ENCODE measurements at regions of chr11 and their contacts with region 1.

Region 1: DNA sequence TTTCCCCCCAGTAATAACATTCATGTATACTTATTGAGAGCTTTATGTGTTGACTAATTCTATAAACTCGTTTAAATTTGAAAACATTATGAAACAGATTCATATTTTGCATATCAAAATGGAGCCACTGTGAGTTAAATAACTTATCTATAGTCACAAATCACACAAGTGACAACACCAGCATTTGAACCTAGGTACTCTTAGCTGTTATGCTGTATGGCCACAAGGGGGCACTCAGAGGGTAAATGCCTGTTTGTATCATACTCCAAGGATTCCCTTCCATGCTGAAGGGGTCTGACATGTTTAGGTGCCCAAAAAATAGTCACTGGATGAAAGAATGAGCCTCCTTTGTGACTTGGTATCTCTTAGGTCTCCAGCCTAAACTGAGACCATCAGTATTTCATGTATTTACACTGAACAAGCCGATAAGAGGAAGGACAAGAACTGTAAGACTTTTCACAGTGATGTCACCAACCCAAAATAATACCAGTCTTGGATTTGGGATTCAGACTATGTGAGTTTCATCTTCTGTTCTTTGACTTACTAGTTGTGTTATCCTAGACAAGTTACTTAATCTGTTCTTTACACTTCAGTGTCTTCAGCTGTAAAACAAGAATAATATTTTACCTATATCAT is 12.2 kb upstream of the OR52D1 start:
- DNase-seq: no peak
- ATAC-seq: peak; percentile 90
- H3K4me3 ChIP-seq: no peak overlapping the region
- H3K27ac ChIP-seq: no peak overlapping the region
- H3K4me1 ChIP-seq: no peaks in the 10 kb centered on the region
- H3K27me3 ChIP-seq: no peaks in the 10 kb centered on the region; a peak in 1 of 4 replicates
- CTCF ChIP-seq: peak; percentile 69 to 83 (median 75)
- EP300 ChIP-seq: no peak
- POLR2A ChIP-seq: no peak
- RAD21 ChIP-seq: peak; percentile 72

Region 2: GRCh38 chr11:5499671-5500070 is 23.4 kb after region 1 on chr11:
- CTCF ChIA-PET with region 1: interaction called, 12 read pairs
- POLR2A ChIA-PET with region 1: no interaction called
- RAD21 ChIA-PET with region 1: interaction called, 4 read pairs
- SMC1A ChIA-PET with region 1: interaction called, 7 read pairs
- in situ Hi-C with region 1: no loop called
- intact Hi-C with region 1: no loop called
- DNase-seq: no peak
- ATAC-seq: no peak
- H3K4me3 ChIP-seq: no peak overlapping the region
- H3K27ac ChIP-seq: no peak overlapping the region
- H3K4me1 ChIP-seq: no peaks in the 10 kb centered on the region
- H3K27me3 ChIP-seq: no peaks in the 10 kb centered on the region
- CTCF ChIP-seq: no peak
- EP300 ChIP-seq: no peak
- POLR2A ChIP-seq: no peak
- RAD21 ChIP-seq: no peak

Region 3: DNA sequence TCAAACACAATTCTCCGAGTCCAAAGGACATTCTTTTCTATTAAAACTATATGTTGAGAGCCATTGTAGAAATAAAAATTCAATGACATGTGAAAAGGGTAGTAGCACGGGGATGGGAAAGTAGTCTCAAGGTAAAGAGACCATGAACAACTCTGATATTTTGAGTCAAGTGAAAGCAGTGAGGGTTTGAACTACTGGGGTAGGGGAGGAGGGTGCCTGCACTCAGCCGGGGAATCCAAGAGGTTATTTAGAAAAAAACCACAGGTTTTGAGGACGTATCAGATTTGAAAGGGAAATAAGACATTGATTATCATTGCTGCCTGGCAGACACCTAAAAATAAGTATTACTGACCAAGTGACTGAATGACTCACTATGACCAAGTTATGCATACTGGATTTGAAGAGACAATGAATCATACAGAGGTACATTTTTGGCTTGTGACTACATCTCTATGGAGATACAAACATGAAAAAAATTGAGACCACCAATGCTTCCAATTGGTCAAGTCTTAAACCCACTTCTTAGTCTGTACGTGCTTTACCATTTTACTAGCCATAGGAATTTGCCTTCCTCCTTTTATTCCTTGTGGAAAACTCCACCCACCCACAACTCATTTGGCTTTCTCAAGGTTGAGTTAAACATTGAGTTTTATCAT is 74.3 kb after region 1 on chr11:
- CTCF ChIA-PET with region 1: interaction called, 20 read pairs
- POLR2A ChIA-PET with region 1: no interaction called
- RAD21 ChIA-PET with region 1: interaction called, 9 read pairs
- SMC1A ChIA-PET with region 1: interaction called, 10 read pairs
- in situ Hi-C with region 1: no loop called
- intact Hi-C with region 1: loop called (anchors 1 kb)
- DNase-seq: peak; percentile 8
- ATAC-seq: peak; percentile 78
- H3K4me3 ChIP-seq: no peak overlapping the region
- H3K27ac ChIP-seq: no peak overlapping the region
- H3K4me1 ChIP-seq: no peaks in the 10 kb centered on the region
- H3K27me3 ChIP-seq: no peaks in the 10 kb centered on the region
- CTCF ChIP-seq: no peak
- EP300 ChIP-seq: peak in 1 of 2 experiments; percentile 27; a peak in 1 of 4 replicates
- POLR2A ChIP-seq: no peak
- RAD21 ChIP-seq: no peak

Region 4: GRCh38 chr11:5556596-5557188 is 80.4 kb after region 1 on chr11:
- CTCF ChIA-PET with region 1: interaction called, 20 read pairs
- POLR2A ChIA-PET with region 1: no interaction called
- RAD21 ChIA-PET with region 1: interaction called, 9 read pairs
- SMC1A ChIA-PET with region 1: interaction called, 10 read pairs
- in situ Hi-C with region 1: no loop called
- intact Hi-C with region 1: loop called (anchors 1 kb)
- DNase-seq: no peak
- ATAC-seq: no peak
- H3K4me3 ChIP-seq: no peak overlapping the region
- H3K27ac ChIP-seq: no peak overlapping the region
- H3K4me1 ChIP-seq: no peaks in the 10 kb centered on the region
- H3K27me3 ChIP-seq: no peaks in the 10 kb centered on the region
- CTCF ChIP-seq: no peak
- EP300 ChIP-seq: no peak
- POLR2A ChIP-seq: no peak
- RAD21 ChIP-seq: no peak

Region 5: GRCh38 chr11:5703741-5704536 is 227.6 kb after region 1 on chr11:
- CTCF ChIA-PET with region 1: no interaction called
- POLR2A ChIA-PET with region 1: no interaction called
- RAD21 ChIA-PET with region 1: no interaction called
- SMC1A ChIA-PET with region 1: no interaction called
- in situ Hi-C with region 1: no loop called
- intact Hi-C with region 1: loop called (anchors 5 kb)
- DNase-seq: no peak
- ATAC-seq: peak; percentile 77
- H3K4me3 ChIP-seq: no peak overlapping the region
- H3K27ac ChIP-seq: no peak overlapping the region; the same call in 1 of the 2 replicates
- H3K4me1 ChIP-seq: peaks cover 3% of the 10 kb centered on the region; the same call in 1 of the 2 replicates
- H3K27me3 ChIP-seq: no peaks in the 10 kb centered on the region
- CTCF ChIP-seq: no peak
- EP300 ChIP-seq: no peak
- POLR2A ChIP-seq: no peak
- RAD21 ChIP-seq: no peak

Region 6: DNA sequence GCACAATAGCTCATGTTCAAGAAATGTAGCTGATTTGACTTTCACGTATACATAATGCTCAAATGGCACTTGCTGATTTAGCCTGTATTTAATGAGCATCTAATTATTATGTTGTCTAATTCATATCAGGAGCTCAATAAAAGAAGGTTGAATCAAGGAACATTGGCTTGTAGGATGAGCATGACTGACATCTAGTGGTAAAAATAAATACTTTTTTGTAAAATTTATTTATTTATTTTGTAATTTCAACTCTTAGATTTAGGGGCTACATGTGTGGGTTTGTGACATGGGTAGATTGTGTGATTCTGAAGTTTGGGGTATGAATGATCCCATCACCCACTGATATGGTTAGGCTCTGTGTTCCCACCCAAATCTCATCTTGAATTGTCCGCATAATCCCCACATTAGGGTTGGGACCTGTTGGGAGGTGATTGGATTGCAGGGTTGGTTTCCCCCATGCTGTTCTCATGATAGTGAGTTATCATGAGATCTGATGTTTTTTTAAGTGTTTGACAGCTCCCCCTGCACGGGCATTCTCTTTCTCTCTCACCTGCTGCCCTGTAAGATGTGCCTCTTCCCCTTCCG is 415.0 kb after region 1 on chr11:
- CTCF ChIA-PET with region 1: interaction called, 19 read pairs
- POLR2A ChIA-PET with region 1: no interaction called
- RAD21 ChIA-PET with region 1: interaction called, 13 read pairs
- SMC1A ChIA-PET with region 1: interaction called, 6 read pairs
- in situ Hi-C with region 1: no loop called
- intact Hi-C with region 1: loop called (anchors 5 kb)
- DNase-seq: peak; percentile 0
- ATAC-seq: no peak; the same call in 2 of the 3 replicates
- H3K4me3 ChIP-seq: no peak overlapping the region
- H3K27ac ChIP-seq: no peak overlapping the region
- H3K4me1 ChIP-seq: no peaks in the 10 kb centered on the region
- H3K27me3 ChIP-seq: no peaks in the 10 kb centered on the region
- CTCF ChIP-seq: peak; percentile 8 to 38 (median 22); a peak in 4 of 6 replicates
- EP300 ChIP-seq: no peak
- POLR2A ChIP-seq: no peak
- RAD21 ChIP-seq: peak; percentile 53